Activated T-helper 2 cell treated with anti-CD3 and anti-CD28 coated beads, Interferon-gamma antibody, Interleukin-2, Interleukin-4, amounts not matched to agents 10 μg/mL and 5 μg/mL and 100 μg/mL, durations not matched to agents 14 hours and 24 hours and 36 hours (primary cell): ENCODE measurements at regions of chr15 and their contacts with region 1.

Region 1: GRCh38 chr15:55196458-55197361 is at the start of gene RSL24D1:
- DNase-seq: peak; percentile 95
- H3K4me3 Mint-ChIP-seq: no peak within 1 kb of the TSS
- H3K27ac Mint-ChIP-seq: no peak within 1 kb of the TSS
- H3K4me1 Mint-ChIP-seq: peaks cover 20% of the 10 kb centered on the region
- H3K27me3 Mint-ChIP-seq: no peaks in the 10 kb centered on the region
- total RNA-seq, gene RSL24D1: 94.0 and 97.0 TPM in 2 replicates

Region 2: GRCh38 chr15:55290528-55291057 is 93.9 kb after region 1 on chr15:
- intact Hi-C with region 1: loop called (anchors 1 kb)
- DNase-seq: peak; percentile 77
- H3K4me3 Mint-ChIP-seq: peak overlapping the region; percentile 78
- H3K27ac Mint-ChIP-seq: peak overlapping the region; percentile 83
- H3K4me1 Mint-ChIP-seq: peaks cover 31% of the 10 kb centered on the region
- H3K27me3 Mint-ChIP-seq: no peaks in the 10 kb centered on the region